Gastrocnemius medialis (tissue), 4 donors: ENCODE measurements at regions of chr6 and their contacts with region 1.

Region 1: GRCh38 chr6:132131758-132132157 is 180.6 kb upstream of the CCN2 start:
- DNase-seq: peak in 1 of 2 donors; percentile 17
- ATAC-seq: peak; percentile 45 to 72
- H3K4me3 ChIP-seq: no peak overlapping the region
- H3K27ac ChIP-seq: peak overlapping the region; percentile 55 to 68 (median 66)
- H3K4me1 ChIP-seq: peaks cover 0 to 5% of the 10 kb centered on the region in 2 donors
- H3K27me3 ChIP-seq: no peaks in the 10 kb centered on the region
- CTCF ChIP-seq: no peak
- POLR2A ChIP-seq: no peak

Region 2: GRCh38 chr6:132017942-132018341 is 113.8 kb before region 1 on chr6:
- in situ Hi-C with region 1: no loop called
- intact Hi-C with region 1: loop called (anchors 5 kb)
- DNase-seq: no peak
- ATAC-seq: no peak
- H3K4me3 ChIP-seq: no peak overlapping the region
- H3K27ac ChIP-seq: no peak overlapping the region
- H3K4me1 ChIP-seq: no peaks in the 10 kb centered on the region
- H3K27me3 ChIP-seq: no peaks in the 10 kb centered on the region
- CTCF ChIP-seq: no peak
- POLR2A ChIP-seq: no peak

Region 3: DNA sequence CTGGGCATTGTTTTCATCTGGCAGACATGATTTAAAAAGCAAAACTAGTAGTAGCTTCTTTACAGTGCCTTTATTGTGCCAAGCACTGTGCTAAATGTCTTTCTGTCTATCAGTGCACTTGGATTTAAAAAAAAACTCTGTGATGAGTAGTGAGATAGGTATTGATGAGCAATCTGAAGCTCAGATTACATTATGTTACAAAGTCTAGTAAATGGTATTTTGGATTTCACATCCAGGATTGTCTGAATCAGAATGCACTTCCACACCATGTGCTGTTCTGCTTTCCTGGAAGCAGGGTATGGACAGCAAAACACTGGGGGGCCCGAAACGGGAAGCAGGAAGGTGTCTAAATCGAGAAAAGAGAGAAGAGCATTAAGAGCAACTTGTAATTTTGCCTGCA is 77.2 kb before region 1 on chr6:
- in situ Hi-C with region 1: no loop called
- intact Hi-C with region 1: no loop called
- DNase-seq: no peak
- ATAC-seq: no peak
- H3K4me3 ChIP-seq: no peak overlapping the region
- H3K27ac ChIP-seq: no peak overlapping the region
- H3K4me1 ChIP-seq: no peaks in the 10 kb centered on the region
- H3K27me3 ChIP-seq: no peaks in the 10 kb centered on the region
- CTCF ChIP-seq: no peak
- POLR2A ChIP-seq: no peak

Region 4: GRCh38 chr6:132161283-132161682 is 29.5 kb after region 1 on chr6:
- in situ Hi-C with region 1: no loop called
- intact Hi-C with region 1: no loop called
- DNase-seq: no peak
- ATAC-seq: no peak
- H3K4me3 ChIP-seq: no peak overlapping the region
- H3K27ac ChIP-seq: no peak overlapping the region
- H3K4me1 ChIP-seq: no peaks in the 10 kb centered on the region
- H3K27me3 ChIP-seq: no peaks in the 10 kb centered on the region
- CTCF ChIP-seq: peak in 3 of 5 experiments; percentile 6 to 34 (median 19)
- POLR2A ChIP-seq: no peak